ENCODE measurements at regions of chr6 and their contacts with region 1.

Region 1: DNA sequence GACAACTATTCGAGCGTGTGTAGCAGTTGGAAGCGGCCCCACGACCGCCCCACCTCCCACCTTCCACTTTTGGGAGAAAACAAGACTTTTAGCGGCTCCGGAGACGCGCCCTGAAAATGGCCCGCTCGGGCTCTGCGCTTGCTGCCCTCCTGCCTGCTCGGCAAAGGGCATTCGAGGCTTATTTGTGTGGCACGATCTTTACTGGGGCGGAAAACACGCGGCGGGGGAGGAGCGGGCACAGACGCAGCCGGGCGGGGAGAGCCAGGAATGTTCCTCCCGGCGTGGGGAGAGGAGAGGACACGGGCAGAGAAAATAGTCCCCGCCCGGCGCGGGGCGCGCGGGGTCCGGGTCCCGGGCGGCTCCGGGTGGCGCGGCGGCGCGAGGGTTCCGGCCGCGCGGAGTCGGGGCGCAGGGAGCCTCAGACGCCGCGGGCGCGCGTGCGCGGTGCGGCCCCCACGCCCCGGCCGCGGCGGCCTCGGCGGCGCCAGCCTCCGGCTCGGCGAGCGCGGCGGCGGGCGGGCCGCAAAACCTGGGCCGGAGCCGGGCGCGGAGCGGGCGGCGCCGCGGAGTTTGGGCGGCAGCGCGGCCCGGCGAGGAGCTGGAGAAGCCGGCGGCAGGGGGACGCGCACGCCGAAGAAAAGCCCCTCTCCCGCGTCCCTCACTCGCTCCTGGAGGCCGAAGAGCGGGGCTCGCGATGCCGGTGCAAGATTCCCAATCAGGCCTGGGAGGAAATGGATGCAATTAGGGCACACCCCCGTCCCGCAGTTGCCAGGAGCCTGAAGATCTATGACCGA is 90.0 kb upstream of the ARID1B start:
- DNase-seq: peak; percentile 75
- H3K4me3 Mint-ChIP-seq: peak overlapping the region; percentile 92
- H3K27ac Mint-ChIP-seq: peak overlapping the region; percentile 83
- H3K4me1 Mint-ChIP-seq: peaks cover 27% of the 10 kb centered on the region
- H3K27me3 Mint-ChIP-seq: peaks cover 4% of the 10 kb centered on the region

Region 2: DNA sequence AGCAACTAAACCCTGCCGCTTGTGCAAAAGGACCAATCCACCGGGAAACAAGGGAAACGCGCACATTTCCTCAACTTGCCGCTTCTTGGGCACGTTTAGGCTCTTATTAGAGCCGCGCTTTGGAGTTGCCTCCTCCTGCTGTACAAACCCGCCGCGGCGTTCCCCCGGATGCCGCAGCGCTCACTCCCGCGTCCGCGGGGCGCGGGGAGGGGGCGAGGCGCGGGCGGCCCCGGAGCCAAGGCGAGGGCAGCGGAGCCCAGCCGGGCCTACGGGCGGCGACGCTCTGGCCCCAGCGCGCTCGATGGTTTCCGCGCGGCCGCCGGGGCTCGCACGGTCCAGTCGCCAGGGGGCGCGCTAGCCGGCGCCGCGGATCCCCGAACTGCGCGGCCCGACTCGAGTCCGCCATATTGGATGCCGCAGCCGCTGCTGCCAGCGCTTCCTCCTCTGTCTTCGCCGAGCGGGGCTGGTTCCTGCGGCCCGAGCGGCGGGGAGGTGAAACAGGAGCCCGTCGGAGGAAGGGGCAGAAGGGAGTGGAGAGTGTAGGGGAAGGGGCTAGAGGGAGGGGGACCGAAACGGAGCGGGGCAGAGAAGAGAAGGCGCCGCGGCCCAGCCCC is 1954.1 kb before region 1 on chr6 and contains the start of gene SCAF8:
- intact Hi-C with region 1: loop called (anchors 2 kb)
- DNase-seq: peak; percentile 85
- H3K4me3 Mint-ChIP-seq: peak within 1 kb of the TSS; percentile 97
- H3K27ac Mint-ChIP-seq: peak within 1 kb of the TSS; percentile 96
- H3K4me1 Mint-ChIP-seq: peaks cover 33% of the 10 kb centered on the region
- H3K27me3 Mint-ChIP-seq: peaks cover 4% of the 10 kb centered on the region
- total RNA-seq, gene SCAF8: 37.7 and 40.9 TPM in 2 replicates

Region 3: GRCh38 chr6:156396068-156396771 is 291.0 kb before region 1 on chr6:
- intact Hi-C with region 1: loop called (anchors 5 kb)
- DNase-seq: peak; percentile 12
- H3K4me3 Mint-ChIP-seq: peak overlapping the region; percentile 27
- H3K27ac Mint-ChIP-seq: peak overlapping the region; percentile 13
- H3K4me1 Mint-ChIP-seq: peaks cover 17% of the 10 kb centered on the region
- H3K27me3 Mint-ChIP-seq: peaks cover 36% of the 10 kb centered on the region

Region 4: GRCh38 chr6:156719720-156720563 is 32.8 kb after region 1 on chr6:
- intact Hi-C with region 1: loop called (anchors 1 kb)
- DNase-seq: peak; percentile 43
- H3K4me3 Mint-ChIP-seq: peak overlapping the region; percentile 75
- H3K27ac Mint-ChIP-seq: peak overlapping the region; percentile 44
- H3K4me1 Mint-ChIP-seq: peaks cover 12% of the 10 kb centered on the region
- H3K27me3 Mint-ChIP-seq: peaks cover 6% of the 10 kb centered on the region

Region 5: GRCh38 chr6:156953479-156954146 is 266.4 kb after region 1 on chr6:
- intact Hi-C with region 1: loop called (anchors 10 kb)
- DNase-seq: peak; percentile 14
- H3K4me3 Mint-ChIP-seq: no peak overlapping the region
- H3K27ac Mint-ChIP-seq: peak overlapping the region; percentile 45
- H3K4me1 Mint-ChIP-seq: peaks cover 51% of the 10 kb centered on the region
- H3K27me3 Mint-ChIP-seq: no peaks in the 10 kb centered on the region

Region 6: DNA sequence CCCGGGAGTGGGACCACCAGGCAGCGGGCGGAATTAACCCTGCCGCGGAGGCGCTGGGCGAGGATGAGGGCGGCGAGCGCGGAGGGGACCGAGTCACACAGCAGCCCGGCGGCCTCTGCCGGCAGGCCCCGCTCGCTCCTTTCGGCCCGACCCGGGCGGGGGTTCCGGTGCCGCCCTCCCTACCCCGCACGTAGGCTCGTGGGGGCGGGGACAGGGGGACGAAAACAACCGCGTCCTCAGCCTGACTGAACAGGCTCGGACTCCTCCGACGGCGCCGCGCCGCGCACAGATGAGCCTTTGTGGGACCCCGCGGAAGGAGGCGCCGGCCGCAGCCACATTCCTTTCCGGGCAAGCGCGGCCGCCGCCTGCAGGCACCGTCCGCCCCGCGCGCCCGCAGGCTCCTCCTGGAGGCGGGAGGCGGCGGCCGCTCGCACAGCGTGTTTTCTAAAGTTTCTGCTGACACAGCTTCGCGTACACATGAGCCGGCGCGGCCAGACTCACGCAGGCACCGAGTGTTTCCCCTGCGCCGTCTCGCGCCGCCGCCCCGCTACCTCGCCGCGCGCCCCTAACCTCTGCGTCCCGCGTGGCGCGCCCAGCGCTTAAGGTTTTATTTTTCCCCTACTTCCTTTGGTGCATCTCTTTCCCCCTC is 334.3 kb after region 1 on chr6:
- intact Hi-C with region 1: loop called (anchors 1 kb)
- DNase-seq: peak; percentile 88
- H3K4me3 Mint-ChIP-seq: peak overlapping the region; percentile 91
- H3K27ac Mint-ChIP-seq: peak overlapping the region; percentile 98
- H3K4me1 Mint-ChIP-seq: peaks cover 49% of the 10 kb centered on the region
- H3K27me3 Mint-ChIP-seq: no peaks in the 10 kb centered on the region

Region 7: GRCh38 chr6:157221007-157221816 is 534.0 kb after region 1 on chr6:
- intact Hi-C with region 1: loop called (anchors 10 kb)
- DNase-seq: peak; percentile 80
- H3K4me3 Mint-ChIP-seq: peak overlapping the region; percentile 79
- H3K27ac Mint-ChIP-seq: peak overlapping the region; percentile 82
- H3K4me1 Mint-ChIP-seq: peaks cover 33% of the 10 kb centered on the region
- H3K27me3 Mint-ChIP-seq: peaks cover 4% of the 10 kb centered on the region

Measured in activated T-helper 1 cell treated with anti-CD3 and anti-CD28 coated beads, Interleukin-12 subunit alpha, Interleukin-12 subunit beta, Interleukin-2, Interleukin-4 antibody, amounts not matched to agents 30 ng/mL and 10 ng/mL and 1 ng/mL, durations not matched to agents 14 hours and 24 hours and 36 hours (primary cell).